CD14-positive monocyte (primary cell): ENCODE measurements at regions of chr3 and their contacts with region 1.

Region 1: GRCh38 chr3:42600111-42600988 is at the start of gene NKTR:
- DNase-seq: peak; percentile 87 to 90 (median 90)
- H3K4me3 ChIP-seq: peak within 1 kb of the TSS; percentile 70 to 94 (median 91)
- H3K4me3 Mint-ChIP-seq: peak within 1 kb of the TSS; percentile 88 to 98
- H3K27ac ChIP-seq: peak within 1 kb of the TSS; percentile 90 to 91
- H3K27ac Mint-ChIP-seq: peak within 1 kb of the TSS; percentile 96 to 100 (median 99)
- H3K4me1 ChIP-seq: peaks cover 19 to 27% of the 10 kb centered on the region in 2 donors
- H3K4me1 Mint-ChIP-seq: peaks cover 22% of the 10 kb centered on the region
- H3K27me3 ChIP-seq: no peaks in the 10 kb centered on the region
- H3K27me3 Mint-ChIP-seq: peaks cover 0 to 3% (median 1%) of the 10 kb centered on the region in 3 donors
- CTCF ChIP-seq: peak; percentile 1
- polyA plus RNA-seq, gene NKTR: 2.6 to 78.5 (median 5.8) TPM

Region 2: DNA sequence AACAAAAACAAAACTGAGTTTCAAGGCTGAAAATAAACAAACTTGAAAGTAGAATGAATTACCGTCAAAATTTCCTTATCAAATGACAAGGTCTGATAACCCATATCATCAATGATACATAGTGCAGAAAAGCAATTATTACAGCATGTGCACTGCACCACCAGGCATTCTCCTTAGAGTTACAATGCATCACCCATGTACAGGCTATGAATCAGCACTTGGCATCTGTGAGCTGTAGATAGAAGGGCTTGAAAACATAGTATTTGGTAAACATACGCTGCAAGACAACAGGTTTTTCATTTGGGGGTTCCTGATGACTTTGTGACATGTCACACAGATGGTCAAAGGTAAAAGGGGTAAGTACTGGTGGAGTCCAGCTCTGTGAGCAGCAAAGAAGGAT is 1135.9 kb before region 1 on chr3:
- intact Hi-C with region 1: no loop called
- DNase-seq: no peak
- H3K4me3 ChIP-seq: no peak overlapping the region
- H3K4me3 Mint-ChIP-seq: no peak overlapping the region
- H3K27ac ChIP-seq: no peak overlapping the region
- H3K27ac Mint-ChIP-seq: no peak overlapping the region
- H3K4me1 ChIP-seq: no peaks in the 10 kb centered on the region
- H3K4me1 Mint-ChIP-seq: no peaks in the 10 kb centered on the region
- H3K27me3 ChIP-seq: no peaks in the 10 kb centered on the region
- H3K27me3 Mint-ChIP-seq: peaks cover 0 to 2% (median 1%) of the 10 kb centered on the region in 3 donors
- CTCF ChIP-seq: no peak

Region 3: DNA sequence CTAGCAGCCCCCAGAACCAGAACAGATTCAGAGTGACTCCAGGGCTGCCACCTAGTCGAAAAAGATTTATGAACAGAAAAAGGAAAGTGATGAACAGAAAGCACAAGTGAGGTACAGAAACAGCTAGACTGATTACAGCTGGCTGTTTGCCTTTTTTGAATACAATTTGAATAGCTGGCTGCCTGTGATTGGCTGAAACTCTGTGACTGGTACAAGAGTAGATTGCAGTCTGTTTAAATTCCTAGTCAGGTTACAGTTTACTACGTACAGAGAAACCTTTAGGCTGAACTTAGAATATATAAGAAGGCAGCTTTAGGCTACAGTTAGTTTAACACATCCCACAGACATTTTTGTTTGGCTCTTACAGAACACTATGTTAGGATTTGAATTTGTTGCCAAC is 162.7 kb after region 1 on chr3:
- intact Hi-C with region 1: loop called in 1 of 2 experiments (anchors 10 kb)
- DNase-seq: peak in 1 of 3 donors; percentile 36
- H3K4me3 ChIP-seq: peak overlapping the region in 1 of 3 experiments; percentile 49
- H3K4me3 Mint-ChIP-seq: no peak overlapping the region
- H3K27ac ChIP-seq: peak overlapping the region; percentile 74 to 87
- H3K27ac Mint-ChIP-seq: peak overlapping the region; percentile 96 to 99 (median 98)
- H3K4me1 ChIP-seq: peaks cover 67 to 75% of the 10 kb centered on the region in 2 donors
- H3K4me1 Mint-ChIP-seq: peaks cover 73% of the 10 kb centered on the region
- H3K27me3 ChIP-seq: no peaks in the 10 kb centered on the region
- H3K27me3 Mint-ChIP-seq: peaks cover 0 to 2% (median 0%) of the 10 kb centered on the region in 3 donors
- CTCF ChIP-seq: no peak

Region 4: GRCh38 chr3:42804106-42804830 is 203.9 kb after region 1 on chr3 and contains the start of gene HIGD1A:
- intact Hi-C with region 1: loop called in 1 of 2 experiments (anchors 10 kb)
- DNase-seq: peak; percentile 88 to 92 (median 91)
- H3K4me3 ChIP-seq: peak within 1 kb of the TSS; percentile 58 to 97 (median 80)
- H3K4me3 Mint-ChIP-seq: peak within 1 kb of the TSS; percentile 98 to 99
- H3K27ac ChIP-seq: peak within 1 kb of the TSS; percentile 79 to 80
- H3K27ac Mint-ChIP-seq: peak within 1 kb of the TSS; percentile 89 to 96 (median 92)
- H3K4me1 ChIP-seq: peaks cover 24 to 36% of the 10 kb centered on the region in 2 donors
- H3K4me1 Mint-ChIP-seq: peaks cover 45% of the 10 kb centered on the region
- H3K27me3 ChIP-seq: peaks cover 2 to 18% of the 10 kb centered on the region in 2 donors
- H3K27me3 Mint-ChIP-seq: peaks cover 14 to 35% (median 17%) of the 10 kb centered on the region in 3 donors
- CTCF ChIP-seq: no peak
- polyA plus RNA-seq, gene HIGD1A: 34.8 to 115 (median 104) TPM

Region 5: GRCh38 chr3:43621656-43622432 is 1021.5 kb after region 1 on chr3 and contains the start of gene ANO10:
- intact Hi-C with region 1: loop called in 1 of 2 experiments (anchors 10 kb)
- DNase-seq: peak; percentile 97 to 99 (median 99)
- H3K4me3 ChIP-seq: peak within 1 kb of the TSS; percentile 76 to 92 (median 79)
- H3K4me3 Mint-ChIP-seq: peak within 1 kb of the TSS; percentile 92 to 97
- H3K27ac ChIP-seq: peak within 1 kb of the TSS; percentile 71 to 78
- H3K27ac Mint-ChIP-seq: peak within 1 kb of the TSS; percentile 90 to 95 (median 92)
- H3K4me1 ChIP-seq: peaks cover 20 to 35% of the 10 kb centered on the region in 2 donors
- H3K4me1 Mint-ChIP-seq: peaks cover 35% of the 10 kb centered on the region
- H3K27me3 ChIP-seq: no peaks in the 10 kb centered on the region
- H3K27me3 Mint-ChIP-seq: peaks cover 0 to 4% (median 2%) of the 10 kb centered on the region in 3 donors
- CTCF ChIP-seq: no peak
- polyA plus RNA-seq, gene ANO10: 11.2 to 24.8 (median 21.6) TPM